ENCODE measurements at regions of chr15 and their contacts with region 1.

Region 1: DNA sequence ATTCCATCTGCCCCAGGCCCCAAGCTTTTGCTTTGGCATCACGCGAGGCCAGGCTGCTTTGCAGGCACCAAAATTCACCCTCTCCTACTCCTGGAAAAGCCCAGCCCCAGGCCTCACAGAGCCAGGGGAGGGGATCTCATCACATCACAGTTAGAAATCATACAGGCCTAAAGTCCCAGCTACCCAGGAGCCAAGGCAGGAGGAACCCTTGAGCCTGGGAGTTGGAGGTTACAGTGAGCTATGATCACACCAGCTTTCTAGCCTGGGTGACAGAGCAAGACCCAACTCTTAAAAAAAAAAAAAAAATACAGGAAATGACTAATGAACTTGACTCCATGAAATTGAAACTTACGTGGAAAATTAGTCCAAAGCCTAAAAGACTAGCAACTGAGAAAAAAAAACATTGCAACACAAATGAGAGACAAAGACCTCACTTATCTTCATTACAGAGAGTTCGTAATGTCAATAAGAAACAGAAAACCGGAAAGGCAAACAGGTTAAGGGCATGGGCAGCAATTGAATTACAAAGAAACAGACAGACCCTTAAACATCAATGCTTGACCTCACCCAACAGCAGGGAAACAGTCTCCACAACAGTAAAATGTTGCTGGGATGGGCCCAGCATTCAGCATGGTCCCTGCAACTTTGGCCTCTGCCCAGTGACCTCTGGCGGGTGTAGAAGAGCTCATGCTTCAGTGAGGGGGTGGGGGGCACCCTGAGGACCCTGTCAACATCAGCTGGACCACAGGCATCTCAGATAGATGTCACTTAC is 151.5 kb downstream of the LRRK1 start:
- DNase-seq: no peak
- ATAC-seq: peak; percentile 62 to 87 (median 78)
- H3K4me3 ChIP-seq: no peak overlapping the region
- H3K27ac ChIP-seq: peak overlapping the region; percentile 13 to 88 (median 68)
- H3K4me1 ChIP-seq: peaks cover 0 to 39% (median 29%) of the 10 kb centered on the region in 9 donors
- H3K27me3 ChIP-seq: no peaks in the 10 kb centered on the region
- CTCF ChIP-seq: no peak

Region 2: GRCh38 chr15:100448492-100448891 is 622.2 kb before region 1 on chr15:
- intact Hi-C with region 1: loop called in 2 of 10 experiments (anchors 10 kb)
- DNase-seq: no peak
- ATAC-seq: no peak
- H3K4me3 ChIP-seq: no peak overlapping the region
- H3K27ac ChIP-seq: no peak overlapping the region
- H3K4me1 ChIP-seq: no peaks in the 10 kb centered on the region
- H3K27me3 ChIP-seq: no peaks in the 10 kb centered on the region
- CTCF ChIP-seq: no peak

Region 3: GRCh38 chr15:100869151-100869999 is 201.3 kb before region 1 on chr15:
- intact Hi-C with region 1: no loop called
- DNase-seq: no peak
- ATAC-seq: no peak
- H3K4me3 ChIP-seq: no peak overlapping the region
- H3K27ac ChIP-seq: no peak overlapping the region
- H3K4me1 ChIP-seq: peaks cover 0 to 1% (median 0%) of the 10 kb centered on the region in 9 donors
- H3K27me3 ChIP-seq: peaks cover 0 to 18% (median 0%) of the 10 kb centered on the region in 7 donors
- CTCF ChIP-seq: peak in 4 of 9 donors; percentile 16 to 31 (median 24)

Measured in heart right ventricle (tissue), 16 donors.